GM12878 (cell line): ENCODE measurements at regions of chr21 and their contacts with region 1.

Region 1: GRCh38 chr21:34693192-34693810 is 24.5 kb downstream of the CLIC6 start:
- DNase-seq: no peak
- ATAC-seq: peak; percentile 27
- H3K4me3 ChIP-seq: no peak overlapping the region
- H3K27ac ChIP-seq: peak overlapping the region; percentile 58
- H3K4me1 ChIP-seq: peaks cover 51% of the 10 kb centered on the region
- H3K27me3 ChIP-seq: no peaks in the 10 kb centered on the region
- CTCF ChIP-seq: peak; percentile 66 to 90 (median 73)
- EP300 ChIP-seq: no peak
- POLR2A ChIP-seq: no peak
- RAD21 ChIP-seq: peak; percentile 83

Region 2: GRCh38 chr21:34669149-34669879 is 24.0 kb before region 1 on chr21:
- CTCF ChIA-PET with region 1: interaction called, 50 read pairs
- POLR2A ChIA-PET with region 1: interaction called, 3 read pairs
- RAD21 ChIA-PET with region 1: interaction called, 11 read pairs
- SMC1A ChIA-PET with region 1: interaction called, 10 read pairs
- in situ Hi-C with region 1: no loop called
- intact Hi-C with region 1: no loop called
- DNase-seq: no peak
- ATAC-seq: peak; percentile 80
- H3K4me3 ChIP-seq: peak overlapping the region; percentile 91
- H3K27ac ChIP-seq: peak overlapping the region; percentile 58
- H3K4me1 ChIP-seq: peaks cover 18% of the 10 kb centered on the region
- H3K27me3 ChIP-seq: no peaks in the 10 kb centered on the region; a peak in 1 of 4 replicates
- CTCF ChIP-seq: no peak
- EP300 ChIP-seq: no peak
- POLR2A ChIP-seq: peak; percentile 71
- RAD21 ChIP-seq: no peak

Region 3: DNA sequence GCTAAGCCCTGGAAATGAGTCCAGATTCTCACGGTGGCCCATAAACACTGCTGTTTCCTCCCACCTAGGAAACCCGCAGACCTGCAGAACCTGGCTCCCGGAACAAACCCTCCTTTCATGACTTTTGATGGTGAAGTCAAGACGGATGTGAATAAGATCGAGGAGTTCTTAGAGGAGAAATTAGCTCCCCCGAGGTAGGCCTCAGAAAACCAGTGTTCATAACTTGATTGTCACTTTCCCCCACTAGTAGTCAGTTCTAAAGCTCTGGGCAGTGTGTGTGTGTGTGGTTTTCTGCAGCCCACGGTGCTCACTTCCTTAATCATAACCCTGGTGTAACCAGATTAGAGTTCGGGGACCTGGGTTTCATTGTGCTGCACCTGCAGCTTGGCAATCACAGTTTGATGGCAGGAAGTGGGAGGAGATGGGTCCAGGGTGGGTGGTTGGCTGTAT is 14.6 kb after region 1 on chr21:
- CTCF ChIA-PET with region 1: interaction called, 15 read pairs
- POLR2A ChIA-PET with region 1: no interaction called
- RAD21 ChIA-PET with region 1: interaction called, 3 read pairs
- SMC1A ChIA-PET with region 1: interaction called, 5 read pairs
- in situ Hi-C with region 1: no loop called
- intact Hi-C with region 1: no loop called
- DNase-seq: peak; percentile 66
- ATAC-seq: peak; percentile 95
- H3K4me3 ChIP-seq: no peak overlapping the region
- H3K27ac ChIP-seq: peak overlapping the region; percentile 82
- H3K4me1 ChIP-seq: peaks cover 25% of the 10 kb centered on the region
- H3K27me3 ChIP-seq: no peaks in the 10 kb centered on the region
- CTCF ChIP-seq: no peak
- EP300 ChIP-seq: peak; percentile 35 to 55; a peak in 2 of 4 replicates
- POLR2A ChIP-seq: no peak
- RAD21 ChIP-seq: no peak

Region 4: GRCh38 chr21:34865928-34866284 is 172.6 kb after region 1 on chr21:
- CTCF ChIA-PET with region 1: no interaction called
- POLR2A ChIA-PET with region 1: no interaction called
- RAD21 ChIA-PET with region 1: no interaction called
- SMC1A ChIA-PET with region 1: no interaction called
- in situ Hi-C with region 1: no loop called
- intact Hi-C with region 1: loop called (anchors 5 kb)
- DNase-seq: peak; percentile 74
- ATAC-seq: peak; percentile 93
- H3K4me3 ChIP-seq: no peak overlapping the region; the same call in 1 of the 2 replicates
- H3K27ac ChIP-seq: peak overlapping the region; percentile 76
- H3K4me1 ChIP-seq: peaks cover 29% of the 10 kb centered on the region
- H3K27me3 ChIP-seq: no peaks in the 10 kb centered on the region; a peak in 1 of 4 replicates
- CTCF ChIP-seq: no peak
- EP300 ChIP-seq: peak; percentile 76 to 97; a peak in 3 of 4 replicates
- POLR2A ChIP-seq: no peak
- RAD21 ChIP-seq: no peak; the same call in 1 of the 2 replicates

Region 5: GRCh38 chr21:35400233-35400957 is 707.1 kb after region 1 on chr21:
- CTCF ChIA-PET with region 1: interaction called, 4 read pairs
- POLR2A ChIA-PET with region 1: no interaction called
- RAD21 ChIA-PET with region 1: interaction called, 10 read pairs
- SMC1A ChIA-PET with region 1: interaction called, 3 read pairs
- in situ Hi-C with region 1: no loop called
- intact Hi-C with region 1: no loop called
- DNase-seq: peak; percentile 19
- ATAC-seq: peak; percentile 71
- H3K4me3 ChIP-seq: no peak overlapping the region
- H3K27ac ChIP-seq: no peak overlapping the region
- H3K4me1 ChIP-seq: no peaks in the 10 kb centered on the region
- H3K27me3 ChIP-seq: peaks cover 0 to 3% of the 10 kb centered on the region in 2 experiments; a peak in 3 of 4 replicates
- CTCF ChIP-seq: peak; percentile 35 to 72 (median 53); a peak in 5 of 6 replicates
- EP300 ChIP-seq: no peak
- POLR2A ChIP-seq: no peak
- RAD21 ChIP-seq: peak; percentile 92

Region 6: GRCh38 chr21:36169436-36170128 is 1476.3 kb after region 1 on chr21:
- CTCF ChIA-PET with region 1: no interaction called
- POLR2A ChIA-PET with region 1: no interaction called
- RAD21 ChIA-PET with region 1: no interaction called
- SMC1A ChIA-PET with region 1: no interaction called
- in situ Hi-C with region 1: no loop called
- intact Hi-C with region 1: no loop called
- DNase-seq: no peak
- ATAC-seq: no peak
- H3K4me3 ChIP-seq: no peak overlapping the region
- H3K27ac ChIP-seq: no peak overlapping the region
- H3K4me1 ChIP-seq: no peaks in the 10 kb centered on the region
- H3K27me3 ChIP-seq: no peaks in the 10 kb centered on the region
- CTCF ChIP-seq: 0 out of 6 replicates have a peak, but pooled peaks of 1 of the 3 experiments have one; percentile 5
- EP300 ChIP-seq: no peak
- POLR2A ChIP-seq: no peak
- RAD21 ChIP-seq: no peak